BJ (cell line): ENCODE measurements at regions of chr11 and their contacts with region 1.

Region 1: DNA sequence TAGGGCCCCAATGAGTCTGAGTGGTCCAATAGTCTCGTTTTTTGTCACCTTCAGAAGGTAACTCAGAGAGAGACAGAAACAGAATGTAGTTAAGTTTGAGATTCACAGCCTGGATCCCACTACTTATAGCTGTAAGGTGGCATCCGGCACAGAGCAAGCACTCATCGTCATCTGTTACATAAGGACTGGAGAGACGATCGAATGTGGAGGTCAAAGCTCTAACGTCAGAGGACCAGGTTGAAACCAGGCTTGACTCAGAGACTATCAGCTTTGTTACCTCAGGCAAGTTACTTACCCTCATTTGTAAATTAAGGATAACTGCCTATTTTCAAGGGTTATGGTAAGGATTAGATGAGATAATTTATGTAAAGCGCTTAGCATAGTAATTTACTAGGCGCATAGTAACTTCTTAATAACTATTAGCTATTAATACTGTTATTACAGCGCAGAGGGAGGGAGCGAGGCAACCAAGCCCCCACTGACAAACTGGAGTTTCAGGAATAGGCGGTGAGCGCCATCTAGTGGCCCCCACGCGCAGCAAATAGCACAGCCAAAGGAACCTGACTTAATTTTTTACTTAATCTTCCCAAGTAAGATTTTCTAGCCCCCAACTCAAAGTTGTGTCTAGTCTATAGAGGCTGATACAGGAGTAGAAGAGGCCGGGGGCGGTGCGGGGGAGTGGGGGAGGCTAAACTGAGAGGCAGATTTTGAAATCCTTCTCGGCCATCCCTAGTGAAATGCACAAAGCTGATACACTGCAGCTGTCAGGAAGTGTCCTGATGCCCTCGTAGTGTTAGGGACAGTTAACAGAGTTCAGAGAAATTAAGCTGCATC is 29.0 kb upstream of the API5 start:
- DNase-seq: no peak
- H3K4me3 ChIP-seq: no peak overlapping the region
- H3K27me3 ChIP-seq: no peaks in the 10 kb centered on the region
- CTCF ChIP-seq: peak; percentile 88

Region 2: GRCh38 chr11:42770444-42771065 is 512.3 kb before region 1 on chr11:
- CTCF ChIA-PET with region 1: interaction called, 26 read pairs
- POLR2A ChIA-PET with region 1: no interaction called
- DNase-seq: no peak
- H3K4me3 ChIP-seq: no peak overlapping the region
- H3K27me3 ChIP-seq: no peaks in the 10 kb centered on the region
- CTCF ChIP-seq: peak; percentile 51

Region 3: DNA sequence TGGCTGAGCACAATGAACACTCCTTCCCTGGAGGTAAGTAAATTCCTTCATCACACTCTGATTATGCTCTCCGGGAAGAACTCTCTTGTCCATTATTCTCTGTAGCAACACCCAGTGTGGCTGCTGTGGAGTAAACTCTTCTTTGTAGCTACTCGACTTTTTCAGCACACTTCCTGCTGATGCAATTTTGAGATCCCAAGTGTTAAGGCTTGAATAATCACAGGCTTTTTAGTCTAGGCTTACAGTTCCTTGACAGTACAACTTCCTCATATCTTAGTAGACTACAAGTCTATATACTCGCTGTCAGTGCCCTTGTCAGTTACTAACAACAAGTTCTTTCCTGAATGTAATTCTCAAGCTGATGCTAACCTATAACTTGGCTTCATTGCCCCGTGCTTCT is 272.8 kb before region 1 on chr11:
- CTCF ChIA-PET with region 1: no interaction called
- POLR2A ChIA-PET with region 1: no interaction called
- DNase-seq: no peak
- H3K4me3 ChIP-seq: no peak overlapping the region
- H3K27me3 ChIP-seq: no peaks in the 10 kb centered on the region
- CTCF ChIP-seq: no peak

Region 4: GRCh38 chr11:43271818-43272217 is 11.0 kb before region 1 on chr11:
- CTCF ChIA-PET with region 1: interaction called, 16 read pairs
- POLR2A ChIA-PET with region 1: no interaction called
- DNase-seq: no peak
- H3K4me3 ChIP-seq: no peak overlapping the region
- H3K27me3 ChIP-seq: no peaks in the 10 kb centered on the region; the same call in 1 of the 2 replicates
- CTCF ChIP-seq: no peak

Region 5: DNA sequence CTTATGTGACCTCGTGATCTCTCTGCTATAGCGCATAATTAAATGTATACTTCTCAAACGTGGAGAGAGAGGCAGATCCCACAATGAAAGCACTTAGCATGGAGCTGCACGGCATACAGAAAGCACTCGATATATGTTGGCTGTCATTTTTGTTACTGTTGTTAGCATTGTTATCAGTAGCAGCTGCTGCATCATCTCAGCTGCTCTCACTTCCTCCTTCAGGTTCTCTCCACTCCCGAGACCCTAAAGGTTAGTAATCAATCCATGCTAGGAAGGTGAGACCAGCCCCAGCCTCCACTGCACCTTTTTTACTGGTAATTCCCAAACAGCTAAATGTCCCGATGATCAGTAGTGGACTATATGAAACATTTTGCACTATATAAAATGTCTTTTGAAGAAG is 15.6 kb after region 1 on chr11:
- CTCF ChIA-PET with region 1: interaction called, 12 read pairs
- POLR2A ChIA-PET with region 1: no interaction called
- DNase-seq: no peak
- H3K4me3 ChIP-seq: no peak overlapping the region
- H3K27me3 ChIP-seq: no peaks in the 10 kb centered on the region
- CTCF ChIP-seq: no peak

Region 6: DNA sequence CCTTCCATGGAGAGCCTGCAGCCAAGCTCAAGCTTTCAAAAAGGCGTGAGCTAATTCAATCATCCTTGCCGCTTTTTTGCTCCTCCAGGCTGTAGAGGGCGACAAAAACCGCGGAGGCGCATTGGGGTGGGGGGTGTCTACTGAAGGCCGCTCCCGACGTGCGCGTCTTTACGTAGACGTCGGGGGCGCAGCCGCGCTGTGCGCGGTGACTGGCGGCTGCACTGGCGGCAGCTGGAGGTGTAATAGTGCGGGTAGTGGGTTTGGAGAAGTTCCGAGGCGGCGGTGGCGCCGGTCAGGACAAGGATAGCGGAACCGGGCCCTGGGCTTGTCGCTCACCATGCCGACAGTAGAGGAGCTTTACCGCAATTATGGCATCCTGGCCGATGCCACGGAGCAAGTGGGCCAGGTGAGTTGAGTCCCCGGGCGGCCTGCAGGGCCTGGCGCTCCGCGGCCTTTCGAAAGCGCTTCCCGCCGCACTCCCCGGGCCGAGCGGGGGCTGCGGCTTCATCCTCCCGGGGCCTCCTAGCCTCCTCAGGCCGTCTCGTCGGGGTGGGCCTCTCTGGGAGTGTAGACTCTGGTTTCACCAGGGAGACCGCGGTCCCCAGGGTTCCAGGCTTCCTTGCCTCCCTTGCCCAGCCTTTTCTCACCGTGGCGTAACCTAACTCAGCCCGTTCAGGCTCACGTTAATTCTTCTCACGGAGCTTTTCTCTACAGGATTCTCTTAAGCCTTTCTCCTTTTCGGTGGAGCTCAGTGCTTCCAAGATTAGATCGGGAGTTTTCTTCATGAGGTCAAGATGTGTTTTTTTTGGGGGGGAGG is 29.2 kb after region 1 on chr11 and contains the start of gene API5:
- CTCF ChIA-PET with region 1: interaction called, 12 read pairs
- POLR2A ChIA-PET with region 1: no interaction called
- DNase-seq: peak; percentile 63
- H3K4me3 ChIP-seq: peak within 1 kb of the TSS; percentile 68
- H3K27me3 ChIP-seq: no peaks in the 10 kb centered on the region
- CTCF ChIP-seq: peak; percentile 89
- polyA plus RNA-seq, gene API5: 29.3 and 58.2 TPM in 2 replicates

Region 7: GRCh38 chr11:43358801-43359421 is 76.1 kb after region 1 on chr11 and contains the start of gene TTC17:
- CTCF ChIA-PET with region 1: no interaction called
- POLR2A ChIA-PET with region 1: no interaction called
- DNase-seq: peak; percentile 48
- H3K4me3 ChIP-seq: peak within 1 kb of the TSS; percentile 89
- H3K27me3 ChIP-seq: no peaks in the 10 kb centered on the region
- CTCF ChIP-seq: no peak
- polyA plus RNA-seq, gene TTC17: 86.5 and 104 TPM in 2 replicates